PC-9 (cell line): ENCODE measurements at regions of chr2 and their contacts with region 1.

Region 1: DNA sequence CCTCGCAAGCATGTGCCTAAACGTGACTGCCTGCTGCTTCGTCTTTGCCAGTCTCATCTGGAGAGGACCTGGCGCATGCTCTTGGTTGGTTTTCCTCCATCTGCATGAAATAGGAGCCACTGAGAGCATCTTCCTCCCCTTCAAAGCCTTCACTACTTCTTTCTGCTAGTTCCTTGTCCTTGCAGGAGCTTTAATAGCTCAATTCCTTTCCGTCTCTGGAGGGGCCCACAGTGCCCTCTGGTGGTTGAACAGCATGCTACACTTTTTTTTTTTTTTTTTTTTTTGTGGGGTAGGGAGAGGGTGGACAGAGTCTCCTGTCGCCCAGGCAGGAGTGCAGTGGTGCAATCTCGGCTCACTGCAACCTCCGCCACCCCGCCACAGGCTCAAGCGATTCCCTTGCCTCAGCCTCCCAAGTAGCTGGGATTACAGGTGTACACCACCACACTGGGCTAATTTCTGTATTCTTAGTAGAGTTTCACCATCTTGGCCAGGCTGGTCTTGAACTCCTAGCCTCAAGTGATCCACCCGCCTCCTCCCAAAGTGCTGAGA is 59.6 kb downstream of the SP110 start:
- DNase-seq: peak; percentile 48 to 58
- H3K4me3 ChIP-seq: no peak overlapping the region
- H3K27ac ChIP-seq: no peak overlapping the region
- H3K4me1 ChIP-seq: no peaks in the 10 kb centered on the region
- H3K27me3 ChIP-seq: no peaks in the 10 kb centered on the region
- CTCF ChIP-seq: peak; percentile 84

Region 2: DNA sequence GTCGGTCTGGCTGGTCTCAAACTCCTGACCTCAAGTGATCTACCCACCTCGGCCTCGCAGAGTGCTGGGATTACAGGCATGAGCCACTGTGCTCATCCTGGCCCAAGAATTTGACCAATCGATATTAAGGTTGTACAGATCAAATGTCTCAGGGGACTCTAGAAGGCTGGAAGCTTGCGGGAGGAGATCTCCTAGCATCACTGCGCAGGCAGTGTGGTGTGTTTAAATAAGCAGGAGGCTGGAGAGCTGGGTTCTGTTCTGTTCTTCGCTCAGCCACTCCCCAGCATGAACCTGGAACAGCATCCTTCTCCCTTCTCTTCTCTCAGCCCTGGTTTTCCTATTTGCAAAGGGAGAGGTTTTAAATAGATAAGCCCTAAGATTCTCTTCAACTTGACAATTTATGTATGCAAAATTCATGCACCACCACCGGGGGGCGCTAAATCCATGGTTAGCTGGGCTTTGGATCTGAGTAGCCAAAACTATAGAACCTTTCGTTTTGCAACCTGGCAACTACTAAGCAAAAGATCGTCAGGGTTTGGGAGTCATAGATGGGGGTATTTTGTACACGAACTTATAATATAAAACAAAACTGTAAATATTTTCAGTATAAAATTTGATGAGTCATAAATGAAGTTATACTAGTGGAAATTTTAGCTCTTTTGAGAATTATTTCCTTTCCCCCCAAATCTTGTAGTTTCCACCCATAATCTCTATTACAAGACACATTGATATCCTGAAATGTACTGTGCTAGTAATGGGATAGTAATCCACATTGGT is 152.1 kb before region 1 on chr2:
- CTCF ChIA-PET with region 1: interaction called, 16 read pairs
- POLR2A ChIA-PET with region 1: no interaction called
- intact Hi-C with region 1: loop called (anchors 1 kb)
- DNase-seq: peak; percentile 42 to 71
- H3K4me3 ChIP-seq: no peak overlapping the region
- H3K27ac ChIP-seq: no peak overlapping the region
- H3K4me1 ChIP-seq: peaks cover 7% of the 10 kb centered on the region
- H3K27me3 ChIP-seq: no peaks in the 10 kb centered on the region
- CTCF ChIP-seq: peak; percentile 94

Region 3: GRCh38 chr2:230068016-230068650 is 92.1 kb before region 1 on chr2:
- CTCF ChIA-PET with region 1: interaction called, 31 read pairs
- POLR2A ChIA-PET with region 1: interaction called, 33 read pairs
- intact Hi-C with region 1: loop called (anchors 1 kb)
- DNase-seq: peak in 1 of 2 experiments; percentile 42
- H3K4me3 ChIP-seq: peak overlapping the region; percentile 77
- H3K27ac ChIP-seq: no peak overlapping the region
- H3K4me1 ChIP-seq: no peaks in the 10 kb centered on the region
- H3K27me3 ChIP-seq: no peaks in the 10 kb centered on the region
- CTCF ChIP-seq: 0 out of 2 replicates have a peak, but pooled peaks have one; percentile 23

Region 4: DNA sequence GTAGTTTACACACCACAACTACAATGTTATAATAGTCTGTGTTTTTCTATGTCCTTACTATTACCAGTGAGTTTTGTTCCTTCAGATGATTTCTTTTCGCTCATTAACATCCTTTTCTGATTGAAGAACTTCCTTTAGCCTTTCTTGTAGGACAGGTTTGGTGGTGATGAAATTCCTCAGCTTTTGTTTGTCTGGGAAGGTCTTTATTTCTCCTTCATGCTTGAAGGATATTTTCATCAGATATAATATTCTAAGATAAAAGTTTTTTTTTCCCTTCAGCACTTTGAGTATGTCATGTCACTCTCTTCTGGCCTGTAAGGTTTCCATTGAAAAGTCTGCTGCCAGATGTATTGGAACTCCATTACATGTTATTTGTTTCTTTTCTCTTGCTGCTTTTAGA is 53.4 kb before region 1 on chr2:
- CTCF ChIA-PET with region 1: interaction called, 17 read pairs
- POLR2A ChIA-PET with region 1: no interaction called
- intact Hi-C with region 1: no loop called
- DNase-seq: peak in 1 of 2 experiments; percentile 15
- H3K4me3 ChIP-seq: no peak overlapping the region
- H3K27ac ChIP-seq: peak overlapping the region; percentile 27; the same call in 1 of the 2 replicates
- H3K4me1 ChIP-seq: peaks cover 12% of the 10 kb centered on the region
- H3K27me3 ChIP-seq: no peaks in the 10 kb centered on the region
- CTCF ChIP-seq: no peak

Region 5: DNA sequence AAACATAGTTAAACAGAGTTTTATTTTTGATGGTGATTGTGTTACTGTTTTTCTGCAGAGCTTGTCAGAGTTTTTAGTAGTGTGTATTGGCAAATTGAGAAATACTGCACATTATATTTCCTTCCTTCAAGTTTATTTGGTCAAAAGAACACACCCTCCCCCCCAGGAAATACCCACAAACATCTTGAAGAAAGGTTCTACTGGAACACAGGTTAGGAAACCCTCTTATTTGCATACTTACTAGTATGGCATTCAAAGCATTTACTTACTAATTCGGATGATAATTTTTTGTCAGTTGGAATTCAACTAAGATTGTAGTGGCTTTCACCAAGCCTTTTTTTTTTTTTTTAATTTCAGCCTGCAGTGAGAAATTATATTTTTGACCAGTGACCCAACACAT is 561.5 kb after region 1 on chr2:
- CTCF ChIA-PET with region 1: interaction called, 14 read pairs
- POLR2A ChIA-PET with region 1: no interaction called
- intact Hi-C with region 1: no loop called
- DNase-seq: peak in 1 of 2 experiments; percentile 54
- H3K4me3 ChIP-seq: no peak overlapping the region
- H3K27ac ChIP-seq: peak overlapping the region; percentile 18; the same call in 1 of the 2 replicates
- H3K4me1 ChIP-seq: peaks cover 25% of the 10 kb centered on the region
- H3K27me3 ChIP-seq: no peaks in the 10 kb centered on the region
- CTCF ChIP-seq: no peak